ENCODE measurements at regions of chr2 and their contacts with region 1.

Region 1: GRCh38 chr2:176595986-176596385 is 326.7 kb downstream of the MTX2 start:
- DNase-seq: peak; percentile 84
- H3K4me3 ChIP-seq: no peak overlapping the region
- H3K27ac ChIP-seq: no peak overlapping the region
- H3K4me1 ChIP-seq: peaks cover 9% of the 10 kb centered on the region
- H3K27me3 ChIP-seq: no peaks in the 10 kb centered on the region
- CTCF ChIP-seq: no peak
- POLR2A ChIP-seq: no peak

Region 2: GRCh38 chr2:176613323-176613987 is 17.5 kb after region 1 on chr2:
- CTCF ChIA-PET with region 1: interaction called, 11 read pairs
- POLR2A ChIA-PET with region 1: no interaction called
- dilution Hi-C with region 1: no loop called
- intact Hi-C with region 1: no loop called
- DNase-seq: peak; percentile 80
- H3K4me3 ChIP-seq: peak overlapping the region in 1 of 3 experiments; percentile 41
- H3K27ac ChIP-seq: peak overlapping the region; percentile 32
- H3K4me1 ChIP-seq: peaks cover 34% of the 10 kb centered on the region
- H3K27me3 ChIP-seq: no peaks in the 10 kb centered on the region
- CTCF ChIP-seq: no peak
- POLR2A ChIP-seq: no peak

Region 3: DNA sequence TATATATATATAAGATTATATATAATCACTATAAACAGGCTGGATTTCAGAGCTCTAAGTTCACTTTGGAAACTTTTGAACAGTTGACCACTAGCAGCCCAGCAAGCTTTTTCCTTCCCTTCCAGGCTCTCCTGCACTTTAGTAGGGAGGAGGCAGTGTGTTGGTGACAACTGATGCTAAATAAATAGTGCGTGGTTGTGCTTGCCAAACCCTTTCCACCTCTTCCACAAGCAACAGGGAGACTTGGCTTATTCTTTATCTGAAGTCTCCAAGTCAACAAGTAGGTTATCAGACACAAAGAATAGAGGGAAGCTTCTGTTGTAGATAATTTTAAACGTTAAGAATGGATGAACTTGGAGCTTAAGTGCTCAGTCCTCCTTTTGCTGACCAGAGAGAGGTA is 208.4 kb after region 1 on chr2:
- CTCF ChIA-PET with region 1: no interaction called
- POLR2A ChIA-PET with region 1: no interaction called
- dilution Hi-C with region 1: no loop called
- intact Hi-C with region 1: no loop called
- DNase-seq: no peak
- H3K4me3 ChIP-seq: no peak overlapping the region
- H3K27ac ChIP-seq: no peak overlapping the region
- H3K4me1 ChIP-seq: no peaks in the 10 kb centered on the region
- H3K27me3 ChIP-seq: peaks cover 0 to 1% of the 10 kb centered on the region in 2 experiments
- CTCF ChIP-seq: no peak
- POLR2A ChIP-seq: no peak